Panc1 (cell line): ENCODE measurements at regions of chr17 and their contacts with region 1.

Region 1: DNA sequence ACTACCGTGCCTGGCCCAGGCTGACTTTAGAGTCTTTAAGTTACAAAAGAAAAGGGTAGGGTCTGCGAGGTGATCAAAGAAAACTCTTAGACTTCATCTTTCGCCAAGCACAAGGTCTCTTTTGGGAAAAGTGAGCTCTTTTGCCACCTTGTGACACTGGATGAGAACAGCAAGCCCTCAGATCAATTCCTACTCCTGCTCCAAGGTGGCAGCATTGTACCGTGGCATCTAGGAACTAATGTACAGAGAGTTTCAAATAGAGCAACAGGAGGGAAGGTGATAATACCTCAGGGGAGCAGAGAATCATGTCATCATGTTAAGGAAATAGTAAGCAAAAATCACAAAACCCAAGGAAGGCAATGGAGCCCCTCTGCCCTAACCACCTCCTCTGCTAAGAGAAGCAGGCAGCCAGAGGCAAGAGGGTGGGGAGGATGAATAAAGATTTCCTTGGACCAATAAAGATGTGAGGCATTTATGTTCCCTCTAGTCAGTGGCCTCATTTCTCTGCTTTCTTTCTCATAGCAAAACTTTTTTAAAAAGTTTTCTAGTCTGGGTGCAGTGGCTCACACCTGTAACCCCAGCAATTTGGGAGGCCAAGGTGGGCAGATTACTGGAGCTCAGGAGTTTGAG is 2.1 kb upstream of the C17orf78 start:
- DNase-seq: peak; percentile 82
- ATAC-seq: peak; percentile 94
- H3K4me3 ChIP-seq: no peak overlapping the region
- H3K27ac ChIP-seq: no peak overlapping the region
- H3K4me1 ChIP-seq: no peaks in the 10 kb centered on the region
- H3K27me3 ChIP-seq: no peaks in the 10 kb centered on the region
- CTCF ChIP-seq: peak; percentile 89

Region 2: GRCh38 chr17:37392024-37392590 is 18.5 kb after region 1 on chr17:
- CTCF ChIA-PET with region 1: interaction called, 6 read pairs
- POLR2A ChIA-PET with region 1: interaction called, 3 read pairs
- in situ Hi-C with region 1: no loop called
- intact Hi-C with region 1: loop called (anchors 1 kb)
- DNase-seq: no peak
- ATAC-seq: no peak
- H3K4me3 ChIP-seq: no peak overlapping the region
- H3K27ac ChIP-seq: peak overlapping the region; percentile 17; the same call in 1 of the 2 replicates
- H3K4me1 ChIP-seq: peaks cover 3% of the 10 kb centered on the region; the same call in 1 of the 2 replicates
- H3K27me3 ChIP-seq: no peaks in the 10 kb centered on the region
- CTCF ChIP-seq: no peak

Region 3: DNA sequence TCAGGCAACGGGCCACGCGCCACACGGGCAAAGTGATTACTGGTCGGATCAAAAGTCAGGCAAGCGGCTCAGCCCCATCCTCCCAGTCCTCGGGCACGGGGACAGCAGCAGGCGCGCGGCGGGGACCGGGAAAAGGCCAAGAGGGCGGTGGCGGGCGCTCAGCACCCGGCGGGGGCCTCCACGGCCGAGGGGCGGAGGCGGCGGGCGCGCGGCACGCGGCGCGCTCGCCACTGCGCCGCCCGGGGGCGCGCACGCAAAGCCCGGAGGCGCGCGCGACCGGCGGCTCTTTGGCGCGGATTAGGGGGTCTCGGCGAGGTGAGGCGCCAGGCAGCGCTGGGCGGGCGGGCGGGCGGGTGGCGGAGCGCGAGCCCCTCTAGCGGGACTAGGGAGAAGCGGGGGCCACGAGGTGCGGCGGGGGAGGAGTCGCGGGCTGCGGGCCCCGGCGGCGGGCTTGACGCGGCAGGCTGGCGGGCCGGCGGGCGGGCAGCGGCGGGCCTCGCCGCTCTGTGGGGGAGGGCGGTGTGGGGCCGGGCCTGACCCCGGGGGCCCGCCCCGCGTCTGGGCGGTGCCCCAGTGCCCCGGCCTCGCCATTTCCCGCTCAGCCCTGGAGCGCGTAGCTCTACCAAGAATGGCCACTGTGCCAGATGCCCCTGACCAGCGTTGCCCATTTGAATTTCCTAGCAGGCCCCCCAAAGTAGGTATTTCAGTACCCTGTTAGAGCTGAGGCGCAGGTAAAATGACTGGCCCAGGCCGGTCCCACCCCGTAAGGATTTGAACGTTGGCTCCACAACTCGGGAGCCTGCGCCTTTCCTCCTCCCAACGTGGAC is 33.2 kb after region 1 on chr17 and contains the starts of genes ACACA and TADA2A:
- CTCF ChIA-PET with region 1: interaction called, 7 read pairs
- POLR2A ChIA-PET with region 1: interaction called, 17 read pairs
- in situ Hi-C with region 1: no loop called
- intact Hi-C with region 1: no loop called
- DNase-seq: no peak
- ATAC-seq: peak; percentile 99
- H3K4me3 ChIP-seq: peak within 1 kb of the TSS; percentile 81 to 87
- H3K27ac ChIP-seq: peak within 1 kb of the TSS; percentile 91
- H3K4me1 ChIP-seq: no peaks in the 10 kb centered on the region
- H3K27me3 ChIP-seq: no peaks in the 10 kb centered on the region
- CTCF ChIP-seq: no peak
- total RNA-seq, gene ACACA: 131 TPM
- total RNA-seq, gene TADA2A: 11.4 TPM